Left cardiac atrium (tissue), 4 donors: ENCODE measurements at regions of chr11 and their contacts with region 1.

Region 1: GRCh38 chr11:29634248-29634647 is 382.6 kb downstream of the KCNA4 start:
- DNase-seq: no peak
- ATAC-seq: no peak

Region 2: GRCh38 chr11:29448246-29448877 is 185.9 kb before region 1 on chr11:
- intact Hi-C with region 1: loop called (anchors 5 to 10 kb)
- DNase-seq: no peak
- ATAC-seq: peak; percentile 74 to 79

Region 3: GRCh38 chr11:29578806-29579205 is 55.4 kb before region 1 on chr11:
- intact Hi-C with region 1: no loop called
- DNase-seq: no peak
- ATAC-seq: no peak